Activated T-helper 2 cell treated with anti-CD3 and anti-CD28 coated beads, Interferon-gamma antibody, Interleukin-2, Interleukin-4, amounts not matched to agents 10 μg/mL and 5 μg/mL and 100 μg/mL, durations not matched to agents 14 hours and 24 hours and 36 hours (primary cell): ENCODE measurements at regions of chr2 and their contacts with region 1.

Region 1: GRCh38 chr2:118019821-118020220 is 6.0 kb upstream of the CCDC93 start:
- DNase-seq: no peak
- H3K4me3 Mint-ChIP-seq: no peak overlapping the region
- H3K27ac Mint-ChIP-seq: no peak overlapping the region
- H3K4me1 Mint-ChIP-seq: peaks cover 6% of the 10 kb centered on the region
- H3K27me3 Mint-ChIP-seq: peaks cover 22% of the 10 kb centered on the region

Region 2: GRCh38 chr2:118061135-118061955 is 41.5 kb after region 1 on chr2:
- intact Hi-C with region 1: loop called (anchors 5 kb)
- DNase-seq: no peak
- H3K4me3 Mint-ChIP-seq: no peak overlapping the region
- H3K27ac Mint-ChIP-seq: no peak overlapping the region
- H3K4me1 Mint-ChIP-seq: peaks cover 7% of the 10 kb centered on the region
- H3K27me3 Mint-ChIP-seq: peaks cover 38% of the 10 kb centered on the region

Region 3: GRCh38 chr2:118145806-118146205 is 126.0 kb after region 1 on chr2:
- intact Hi-C with region 1: no loop called
- DNase-seq: no peak
- H3K4me3 Mint-ChIP-seq: no peak overlapping the region
- H3K27ac Mint-ChIP-seq: no peak overlapping the region
- H3K4me1 Mint-ChIP-seq: peaks cover 5% of the 10 kb centered on the region
- H3K27me3 Mint-ChIP-seq: peaks cover 2% of the 10 kb centered on the region